Activated CD8-positive, alpha-beta T cell treated with anti-CD3 and anti-CD28 coated beads for 36 hours (primary cell): ENCODE measurements at regions of chr5 and their contacts with region 1.

Region 1: DNA sequence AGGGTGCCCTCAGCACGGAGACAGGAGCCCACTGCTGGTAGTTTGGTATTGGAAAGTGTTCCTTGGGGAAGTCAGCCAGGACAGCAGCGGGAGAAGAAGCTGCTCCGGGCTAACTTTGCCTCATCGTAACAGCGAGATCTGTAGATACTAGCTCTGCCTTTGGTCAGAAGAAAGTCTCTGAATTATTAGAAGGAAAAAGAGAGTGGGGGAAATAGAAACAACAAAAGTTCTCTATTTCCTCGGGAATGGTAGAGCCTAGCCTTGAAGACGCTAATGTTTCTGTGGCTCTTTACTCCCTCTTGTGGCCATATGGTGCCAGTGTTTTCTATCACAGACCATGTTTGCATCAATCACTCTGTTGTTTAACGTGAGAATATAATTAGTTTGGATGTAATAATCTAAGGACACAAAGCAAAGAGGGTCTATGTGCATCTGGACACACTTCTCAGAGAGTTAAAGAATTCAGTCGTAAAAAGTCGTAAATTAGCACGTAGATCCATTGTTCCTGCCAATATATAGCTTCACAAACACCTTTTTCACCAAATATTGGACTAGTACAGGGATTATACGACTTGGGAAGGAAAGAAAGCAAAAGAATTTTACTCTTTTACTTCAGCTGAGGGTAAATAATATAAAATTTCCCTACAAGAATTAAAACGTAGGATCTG is 40.2 kb upstream of the HSD17B4 start:
- DNase-seq: peak; percentile 66
- ATAC-seq: peak; percentile 84
- H3K4me3 Mint-ChIP-seq: peak overlapping the region; percentile 78
- H3K27ac Mint-ChIP-seq: peak overlapping the region; percentile 80
- H3K4me1 Mint-ChIP-seq: peaks cover 41% of the 10 kb centered on the region
- H3K27me3 Mint-ChIP-seq: no peaks in the 10 kb centered on the region
- CTCF ChIP-seq: peak; percentile 93

Region 2: DNA sequence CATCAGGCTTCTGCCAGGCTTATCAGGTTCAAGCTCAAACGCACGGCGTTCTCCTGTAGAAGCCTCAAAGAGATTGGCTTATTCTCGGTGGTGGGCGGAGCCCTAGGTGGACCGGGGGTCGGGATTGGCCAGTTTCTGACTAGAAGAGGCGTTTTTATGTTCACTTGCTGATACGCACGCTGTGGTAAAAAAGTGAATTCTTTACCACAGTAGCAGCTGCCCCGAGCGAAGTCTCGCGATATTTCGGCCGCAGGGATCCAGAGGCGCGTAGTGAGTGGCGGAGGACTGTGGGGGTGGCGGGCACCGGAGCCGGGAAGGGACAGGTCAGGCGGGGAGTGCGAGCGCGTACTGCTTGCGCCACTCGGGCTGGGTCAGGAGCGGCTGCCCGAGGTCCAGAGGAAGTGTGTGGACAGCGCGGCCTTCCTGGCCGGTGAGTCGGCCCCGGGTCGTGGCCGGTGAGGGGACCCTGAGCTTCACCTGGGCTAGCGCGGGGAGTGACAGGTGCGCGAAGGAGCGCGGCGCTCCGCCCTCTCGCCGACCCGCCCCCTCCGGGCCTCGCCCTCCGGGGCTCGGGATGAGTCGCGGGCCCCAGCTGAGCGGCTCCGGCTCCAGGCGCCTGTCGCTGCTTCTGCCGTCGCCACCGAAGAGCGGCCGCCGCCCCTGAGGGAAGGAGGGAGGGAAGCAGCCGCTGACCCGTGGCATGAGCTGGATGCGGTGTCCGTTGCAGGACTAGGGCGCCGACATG is 341.1 kb before region 1 on chr5 and contains the start of gene DMXL1:
- CTCF ChIA-PET with region 1: interaction called, 8 read pairs
- POLR2A ChIA-PET with region 1: no interaction called
- intact Hi-C with region 1: loop called (anchors 5 kb)
- DNase-seq: peak; percentile 99
- ATAC-seq: peak; percentile 87
- H3K4me3 Mint-ChIP-seq: peak within 1 kb of the TSS; percentile 85
- H3K27ac Mint-ChIP-seq: peak within 1 kb of the TSS; percentile 99
- H3K4me1 Mint-ChIP-seq: peaks cover 26% of the 10 kb centered on the region
- H3K27me3 Mint-ChIP-seq: peaks cover 1% of the 10 kb centered on the region
- CTCF ChIP-seq: no peak
- total RNA-seq, gene DMXL1: 20.8 to 23.3 TPM

Region 3: GRCh38 chr5:119284031-119284430 is 128.0 kb before region 1 on chr5:
- CTCF ChIA-PET with region 1: interaction called, 19 read pairs
- POLR2A ChIA-PET with region 1: no interaction called
- intact Hi-C with region 1: no loop called
- DNase-seq: no peak
- ATAC-seq: no peak
- H3K4me3 Mint-ChIP-seq: no peak overlapping the region
- H3K27ac Mint-ChIP-seq: peak overlapping the region; percentile 81
- H3K4me1 Mint-ChIP-seq: peaks cover 99% of the 10 kb centered on the region
- H3K27me3 Mint-ChIP-seq: no peaks in the 10 kb centered on the region
- CTCF ChIP-seq: no peak

Region 4: GRCh38 chr5:119315516-119315949 is 96.5 kb before region 1 on chr5:
- CTCF ChIA-PET with region 1: interaction called, 92 read pairs
- POLR2A ChIA-PET with region 1: no interaction called
- intact Hi-C with region 1: loop called (anchors 5 kb)
- DNase-seq: peak; percentile 84
- ATAC-seq: peak; percentile 79
- H3K4me3 Mint-ChIP-seq: peak overlapping the region; percentile 38
- H3K27ac Mint-ChIP-seq: peak overlapping the region; percentile 81
- H3K4me1 Mint-ChIP-seq: peaks cover 93% of the 10 kb centered on the region
- H3K27me3 Mint-ChIP-seq: no peaks in the 10 kb centered on the region
- CTCF ChIP-seq: peak; percentile 70

Region 5: GRCh38 chr5:119355685-119356611 is 56.1 kb before region 1 on chr5 and contains the start of gene TNFAIP8:
- CTCF ChIA-PET with region 1: interaction called, 46 read pairs
- POLR2A ChIA-PET with region 1: interaction called, 3 read pairs
- intact Hi-C with region 1: loop called (anchors 5 kb)
- DNase-seq: peak; percentile 85
- ATAC-seq: peak; percentile 63
- H3K4me3 Mint-ChIP-seq: peak within 1 kb of the TSS; percentile 98
- H3K27ac Mint-ChIP-seq: peak within 1 kb of the TSS; percentile 97
- H3K4me1 Mint-ChIP-seq: peaks cover 62% of the 10 kb centered on the region
- H3K27me3 Mint-ChIP-seq: no peaks in the 10 kb centered on the region
- CTCF ChIP-seq: no peak
- total RNA-seq, gene TNFAIP8: 135 to 141 TPM

Region 6: GRCh38 chr5:119389288-119390030 is 22.6 kb before region 1 on chr5:
- CTCF ChIA-PET with region 1: interaction called, 27 read pairs
- POLR2A ChIA-PET with region 1: interaction called, 4 read pairs
- intact Hi-C with region 1: no loop called
- DNase-seq: no peak
- ATAC-seq: peak; percentile 40
- H3K4me3 Mint-ChIP-seq: no peak overlapping the region
- H3K27ac Mint-ChIP-seq: peak overlapping the region; percentile 86
- H3K4me1 Mint-ChIP-seq: peaks cover 89% of the 10 kb centered on the region
- H3K27me3 Mint-ChIP-seq: no peaks in the 10 kb centered on the region
- CTCF ChIP-seq: no peak